Sigmoid colon (tissue), 7 donors: ENCODE measurements at regions of chr5 and their contacts with region 1.

Region 1: DNA sequence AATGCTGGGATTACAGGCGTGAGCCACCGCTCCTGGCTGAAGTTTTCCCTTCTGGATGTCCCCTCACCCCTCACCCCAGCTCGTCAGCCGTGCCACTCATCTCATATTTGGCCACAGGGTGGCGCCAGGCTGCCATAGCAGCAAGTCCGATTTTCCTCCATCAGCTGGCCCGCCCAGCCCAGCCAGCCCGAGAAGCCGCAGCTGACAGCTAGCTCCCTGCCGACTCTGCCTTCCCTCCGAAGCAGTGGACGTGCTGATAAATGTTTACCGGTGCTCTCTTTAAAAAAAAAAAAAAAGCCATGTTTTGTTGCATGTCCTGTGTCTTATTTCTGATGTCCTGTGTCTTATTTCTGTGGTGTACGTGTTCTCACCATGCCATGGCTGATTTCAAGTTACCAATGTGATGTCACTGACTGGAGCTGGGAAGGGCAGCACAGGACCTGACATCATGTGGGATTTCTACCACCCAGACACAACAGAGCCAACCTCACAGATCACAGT is 58.3 kb downstream of the PFDN1 start:
- DNase-seq: peak; percentile 96
- H3K4me3 ChIP-seq: no peak overlapping the region
- H3K27ac ChIP-seq: peak overlapping the region; percentile 0 to 91 (median 80)
- H3K4me1 ChIP-seq: peaks cover 0 to 88% (median 79%) of the 10 kb centered on the region in 4 donors
- H3K27me3 ChIP-seq: no peaks in the 10 kb centered on the region
- CTCF ChIP-seq: peak; percentile 84 to 96 (median 92)
- EP300 ChIP-seq: no peak
- POLR2A ChIP-seq: no peak

Region 2: DNA sequence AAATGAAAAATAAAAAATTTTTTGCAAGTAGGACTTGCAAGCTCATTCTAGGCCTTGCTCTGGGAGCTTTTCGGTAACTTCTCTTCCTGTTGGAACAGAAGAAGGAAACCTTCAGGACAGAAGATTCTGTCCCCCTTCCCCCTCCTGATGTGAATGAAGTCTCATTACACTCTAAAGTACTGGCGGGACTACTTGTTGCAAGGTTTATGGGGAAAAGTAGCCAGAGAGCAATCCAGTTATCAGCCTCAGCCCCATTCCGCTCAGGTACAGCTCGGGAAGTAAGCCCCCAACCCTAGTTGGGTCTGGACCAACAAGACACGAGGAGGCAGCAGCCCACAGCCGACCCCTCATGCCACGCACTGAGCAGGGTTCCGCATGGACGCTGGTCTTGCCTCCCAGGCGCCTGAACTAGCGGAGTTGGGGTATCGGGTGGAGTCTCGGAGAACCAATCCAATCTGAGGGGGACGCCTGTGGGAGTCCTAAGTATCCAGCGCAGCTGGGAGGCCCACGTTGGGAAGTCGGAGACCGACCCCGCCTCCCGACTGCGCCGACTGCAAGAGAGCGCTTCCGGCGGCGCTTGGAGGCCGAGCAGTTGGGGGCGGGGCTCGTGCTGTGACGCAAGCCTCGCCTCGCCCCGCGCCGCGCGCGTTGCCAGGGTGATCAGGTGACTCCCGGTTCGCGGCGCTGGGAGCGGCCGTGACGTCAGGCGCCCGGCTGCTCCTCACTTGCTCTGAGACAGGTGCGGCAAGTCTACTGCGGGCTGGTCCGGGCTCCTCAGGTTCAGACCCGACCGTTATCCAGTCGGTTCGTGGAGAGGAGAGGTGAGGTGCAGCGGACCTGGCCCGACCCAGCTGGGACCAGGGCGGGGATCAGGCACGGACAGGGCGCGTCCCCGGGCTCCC is 69.9 kb before region 1 on chr5 and contains the start of gene CYSTM1:
- intact Hi-C with region 1: loop called (anchors 5 kb)
- DNase-seq: peak; percentile 99
- H3K4me3 ChIP-seq: peak within 1 kb of the TSS; percentile 79 to 99 (median 94)
- H3K27ac ChIP-seq: peak within 1 kb of the TSS; percentile 95 to 99 (median 98)
- H3K4me1 ChIP-seq: peaks cover 0 to 34% (median 28%) of the 10 kb centered on the region in 4 donors
- H3K27me3 ChIP-seq: no peaks in the 10 kb centered on the region
- CTCF ChIP-seq: no peak
- EP300 ChIP-seq: peak in 3 of 4 donors; percentile 30 to 90 (median 41)
- POLR2A ChIP-seq: peak; percentile 49 to 89
- total RNA-seq, gene CYSTM1: 23.8 to 51.7 (median 36.2) TPM

Region 3: GRCh38 chr5:140346348-140347101 is 102.0 kb after region 1 on chr5 and contains the start of gene HBEGF:
- intact Hi-C with region 1: loop called (anchors 1 kb)
- DNase-seq: peak; percentile 88
- H3K4me3 ChIP-seq: peak within 1 kb of the TSS; percentile 54 to 78 (median 70)
- H3K27ac ChIP-seq: peak within 1 kb of the TSS; percentile 79 to 93 (median 86)
- H3K4me1 ChIP-seq: peaks cover 0 to 47% (median 36%) of the 10 kb centered on the region in 4 donors
- H3K27me3 ChIP-seq: no peaks in the 10 kb centered on the region
- CTCF ChIP-seq: peak in 2 of 4 experiments; percentile 25 to 27
- EP300 ChIP-seq: no peak
- POLR2A ChIP-seq: peak; percentile 68 to 75
- total RNA-seq, gene HBEGF: 4.7 to 17.6 (median 10.4) TPM

Region 4: GRCh38 chr5:140357726-140358093 is 113.1 kb after region 1 on chr5:
- intact Hi-C with region 1: loop called (anchors 1 kb)
- DNase-seq: peak; percentile 94
- H3K4me3 ChIP-seq: peak overlapping the region in 2 of 4 donors; percentile 20 to 25
- H3K27ac ChIP-seq: peak overlapping the region in 3 of 4 donors; percentile 42 to 56 (median 44)
- H3K4me1 ChIP-seq: peaks cover 0 to 11% (median 7%) of the 10 kb centered on the region in 4 donors
- H3K27me3 ChIP-seq: no peaks in the 10 kb centered on the region
- CTCF ChIP-seq: peak; percentile 79 to 91 (median 89)
- EP300 ChIP-seq: no peak
- POLR2A ChIP-seq: no peak

Region 5: GRCh38 chr5:140700177-140701144 is 455.9 kb after region 1 on chr5 and contains the start of gene ZMAT2:
- intact Hi-C with region 1: loop called (anchors 10 kb)
- DNase-seq: peak; percentile 98
- H3K4me3 ChIP-seq: peak within 1 kb of the TSS; percentile 76 to 88 (median 79)
- H3K27ac ChIP-seq: peak within 1 kb of the TSS; percentile 78 to 80 (median 78)
- H3K4me1 ChIP-seq: peaks cover 0 to 17% (median 16%) of the 10 kb centered on the region in 4 donors
- H3K27me3 ChIP-seq: no peaks in the 10 kb centered on the region
- CTCF ChIP-seq: no peak
- EP300 ChIP-seq: no peak
- POLR2A ChIP-seq: peak; percentile 64 to 83
- total RNA-seq, gene ZMAT2: 28.0 to 46.0 (median 36.9) TPM